ENCODE measurements at regions of chr19 and their contacts with region 1.

Region 1: DNA sequence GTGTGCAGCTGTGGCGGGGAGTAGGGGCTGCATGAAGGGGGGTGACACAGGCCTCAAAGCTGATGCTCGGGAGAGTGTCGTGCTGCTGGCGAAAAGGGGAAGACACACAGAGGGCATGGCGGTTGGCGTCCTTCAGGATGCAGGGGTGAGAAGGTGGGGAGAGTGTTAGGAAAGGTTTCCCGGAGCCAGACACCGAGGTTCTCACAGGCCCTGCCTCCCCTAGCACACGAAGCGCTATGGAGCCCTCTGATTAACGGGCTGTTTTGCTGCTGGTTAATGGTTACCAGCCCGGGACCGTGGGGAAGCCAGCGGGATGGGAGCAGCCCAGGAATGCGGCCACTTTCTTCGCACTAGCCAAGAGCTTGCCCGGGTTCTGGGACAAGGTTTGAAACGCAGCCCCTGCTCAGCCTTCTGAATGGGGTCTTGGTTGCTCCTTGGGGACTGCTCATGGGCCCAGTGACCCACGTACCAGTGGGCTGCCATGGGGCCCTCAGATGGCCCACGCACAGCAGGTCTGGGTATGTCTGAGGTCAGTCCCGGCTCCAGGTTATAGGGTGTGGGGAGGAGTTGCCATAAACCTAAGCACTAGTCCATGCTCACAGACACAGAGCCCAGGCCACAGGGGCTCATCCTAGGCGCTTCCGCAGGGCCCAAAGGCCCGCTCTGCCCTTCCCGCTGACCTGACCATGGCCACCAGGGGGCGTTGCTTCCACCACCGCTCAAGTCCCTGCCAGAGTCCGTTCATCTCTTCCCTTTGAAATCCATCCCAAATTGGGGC is 31.3 kb upstream of the ISYNA1 start:
- DNase-seq: peak; percentile 84
- H3K4me3 ChIP-seq: no peak overlapping the region
- H3K27ac ChIP-seq: peak overlapping the region in 1 of 4 donors; percentile 25
- H3K4me1 ChIP-seq: peaks cover 0 to 58% (median 56%) of the 10 kb centered on the region in 4 donors
- H3K27me3 ChIP-seq: no peaks in the 10 kb centered on the region
- CTCF ChIP-seq: peak; percentile 40 to 66 (median 60)
- EP300 ChIP-seq: no peak
- POLR2A ChIP-seq: no peak

Region 2: DNA sequence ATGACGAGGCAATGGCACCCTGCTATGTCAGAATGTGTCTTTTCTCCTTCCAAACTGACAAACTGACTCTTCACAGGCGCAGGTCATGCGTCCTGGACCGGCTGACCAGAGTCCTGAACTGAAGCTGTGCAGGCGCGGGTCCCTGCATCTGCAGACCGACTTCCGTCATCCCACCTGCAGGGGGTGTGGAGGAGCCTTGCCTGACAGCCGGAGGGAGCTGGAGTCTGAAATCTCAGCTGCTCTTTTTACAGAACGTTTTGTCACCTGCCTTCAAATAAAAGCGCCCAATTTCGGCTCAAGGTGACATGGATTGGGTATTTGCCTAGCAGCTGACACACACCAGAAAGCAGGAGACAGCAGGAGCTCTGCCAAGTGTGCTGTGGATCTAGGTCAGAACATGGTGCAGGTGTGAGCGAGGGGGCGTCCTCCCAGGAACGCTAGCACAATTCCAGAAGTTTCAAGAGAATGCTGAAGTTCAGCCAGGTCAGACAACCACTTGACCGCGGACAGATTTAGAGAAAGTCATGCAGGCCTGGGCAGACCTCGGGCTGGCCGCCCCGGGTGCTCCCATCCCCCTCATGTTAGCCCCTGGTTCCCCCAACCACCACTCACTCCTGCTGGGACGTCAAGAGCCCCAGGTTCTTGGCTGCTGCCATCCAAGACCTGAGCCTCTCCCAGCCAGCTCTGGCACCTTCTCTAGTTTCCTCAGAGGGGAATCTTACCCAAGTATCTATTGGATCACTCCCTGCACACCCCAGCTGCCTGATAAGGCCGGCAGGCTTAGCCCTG is 19.8 kb after region 1 on chr19:
- intact Hi-C with region 1: no loop called
- DNase-seq: no peak
- H3K4me3 ChIP-seq: no peak overlapping the region
- H3K27ac ChIP-seq: peak overlapping the region in 3 of 4 donors; percentile 38 to 69 (median 44)
- H3K4me1 ChIP-seq: peaks cover 0 to 64% (median 59%) of the 10 kb centered on the region in 4 donors
- H3K27me3 ChIP-seq: no peaks in the 10 kb centered on the region
- CTCF ChIP-seq: peak; percentile 18 to 41 (median 28)
- EP300 ChIP-seq: no peak
- POLR2A ChIP-seq: no peak

Region 3: GRCh38 chr19:18657590-18658365 is 188.5 kb after region 1 on chr19:
- intact Hi-C with region 1: loop called (anchors 10 kb)
- DNase-seq: peak; percentile 82
- H3K4me3 ChIP-seq: no peak overlapping the region
- H3K27ac ChIP-seq: peak overlapping the region; percentile 60 to 84 (median 68)
- H3K4me1 ChIP-seq: peaks cover 0 to 45% (median 34%) of the 10 kb centered on the region in 4 donors
- H3K27me3 ChIP-seq: no peaks in the 10 kb centered on the region
- CTCF ChIP-seq: no peak
- EP300 ChIP-seq: peak in 2 of 4 donors; percentile 7 to 18
- POLR2A ChIP-seq: no peak

Region 4: DNA sequence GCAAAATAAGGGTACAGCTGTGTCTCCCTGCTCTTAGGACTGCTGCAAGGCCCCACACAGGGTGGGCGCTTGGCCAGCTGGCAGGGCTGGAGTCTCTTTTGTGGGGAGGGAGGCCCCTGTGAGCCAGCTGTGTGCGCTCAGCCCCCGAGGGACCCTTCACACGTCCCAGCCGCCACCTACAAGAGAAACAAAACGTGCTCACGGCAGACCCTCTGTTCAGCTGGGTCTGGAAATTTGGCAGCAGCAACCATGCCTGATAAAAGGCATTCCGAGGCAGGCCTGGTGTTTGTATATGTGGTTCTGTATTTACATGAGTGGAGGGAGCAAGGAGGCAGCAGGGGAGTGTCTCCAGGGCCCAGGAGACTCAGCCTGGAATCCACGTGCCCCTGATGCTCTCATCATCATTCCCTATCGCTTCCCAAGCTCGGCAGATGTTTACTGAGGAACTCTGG is 264.0 kb after region 1 on chr19:
- intact Hi-C with region 1: no loop called
- DNase-seq: peak; percentile 90
- H3K4me3 ChIP-seq: no peak overlapping the region
- H3K27ac ChIP-seq: peak overlapping the region in 3 of 4 donors; percentile 63 to 83 (median 69)
- H3K4me1 ChIP-seq: peaks cover 0 to 42% (median 27%) of the 10 kb centered on the region in 4 donors
- H3K27me3 ChIP-seq: no peaks in the 10 kb centered on the region
- CTCF ChIP-seq: no peak
- EP300 ChIP-seq: peak in 1 of 4 donors; percentile 50
- POLR2A ChIP-seq: no peak